GM13977 (cell line): ENCODE measurements at regions of chr10 and their contacts with region 1.

Region 1: DNA sequence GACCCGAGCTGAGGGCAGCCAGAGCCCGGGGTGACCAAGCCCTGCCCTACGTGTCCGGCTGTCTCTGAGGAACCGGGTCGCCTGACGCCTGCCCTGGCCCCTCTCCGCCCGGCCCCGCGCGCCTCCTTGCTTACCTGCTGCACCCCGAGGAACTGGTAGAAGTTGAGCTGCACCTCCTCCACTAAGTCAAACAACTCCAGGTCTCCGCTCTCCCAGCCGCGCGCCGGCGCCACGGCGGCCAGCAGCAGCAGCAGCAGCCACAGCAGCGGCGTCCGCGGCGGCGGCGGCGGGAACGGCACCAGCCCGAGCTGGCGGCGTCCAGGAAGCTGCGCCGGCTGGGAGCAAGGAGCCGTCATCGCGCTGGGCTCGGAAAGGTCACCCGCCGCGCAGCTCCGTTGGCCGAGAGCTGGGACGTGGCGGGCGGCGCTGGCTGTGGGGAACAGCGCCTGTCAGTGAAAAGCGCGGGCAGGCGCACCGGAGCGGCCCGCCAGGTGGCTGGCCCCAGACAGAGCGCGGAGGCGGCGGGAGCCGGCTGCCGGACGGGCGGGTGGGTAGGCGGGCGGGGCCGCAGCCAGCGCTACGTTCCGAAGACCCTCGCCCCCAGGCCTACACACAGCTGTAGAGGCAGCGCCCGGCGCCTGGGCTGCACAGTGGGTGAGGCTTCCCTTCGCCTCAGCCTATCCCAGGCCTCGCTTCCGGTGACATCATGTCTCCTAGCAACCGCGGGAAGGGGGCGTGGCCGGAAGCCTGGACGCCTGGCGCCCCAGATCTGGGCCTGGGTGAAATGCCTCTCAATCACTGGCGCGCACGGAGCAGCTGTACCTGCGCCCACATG is at the start of gene DNAJC1:
- DNase-seq: peak; percentile 94
- CTCF ChIP-seq: peak; percentile 0

Region 2: GRCh38 chr10:21638681-21639080 is 364.6 kb before region 1 on chr10:
- in situ Hi-C with region 1: no loop called
- DNase-seq: no peak
- CTCF ChIP-seq: no peak

Region 3: GRCh38 chr10:22218451-22218850 is 215.2 kb after region 1 on chr10:
- in situ Hi-C with region 1: loop called (anchors 25 kb)
- DNase-seq: no peak
- CTCF ChIP-seq: no peak

Region 4: GRCh38 chr10:22325272-22326144 is 322.2 kb after region 1 on chr10:
- in situ Hi-C with region 1: loop called (anchors 10 kb)
- DNase-seq: peak; percentile 91
- CTCF ChIP-seq: no peak

Region 5: DNA sequence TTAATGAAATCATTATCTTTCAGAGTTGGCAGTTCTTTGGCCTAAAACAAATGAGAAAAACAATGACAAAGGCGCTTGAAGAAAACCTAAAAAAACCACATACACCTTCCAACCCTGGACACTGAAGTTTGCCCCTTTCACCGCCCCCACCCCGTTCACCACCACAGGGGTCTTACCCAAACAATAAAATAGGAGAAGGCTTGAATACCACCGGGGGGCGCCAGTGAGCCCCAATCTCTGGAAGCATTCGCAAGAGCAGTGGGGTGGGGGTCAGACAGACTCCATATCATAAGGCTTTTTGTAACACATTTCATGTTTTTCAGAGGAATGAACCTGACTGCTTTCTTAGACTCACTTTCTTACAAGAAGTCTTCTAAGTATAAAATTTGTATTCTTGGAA is 547.4 kb after region 1 on chr10:
- in situ Hi-C with region 1: loop called (anchors 25 kb)
- DNase-seq: peak; percentile 52
- CTCF ChIP-seq: peak; percentile 59

Region 6: DNA sequence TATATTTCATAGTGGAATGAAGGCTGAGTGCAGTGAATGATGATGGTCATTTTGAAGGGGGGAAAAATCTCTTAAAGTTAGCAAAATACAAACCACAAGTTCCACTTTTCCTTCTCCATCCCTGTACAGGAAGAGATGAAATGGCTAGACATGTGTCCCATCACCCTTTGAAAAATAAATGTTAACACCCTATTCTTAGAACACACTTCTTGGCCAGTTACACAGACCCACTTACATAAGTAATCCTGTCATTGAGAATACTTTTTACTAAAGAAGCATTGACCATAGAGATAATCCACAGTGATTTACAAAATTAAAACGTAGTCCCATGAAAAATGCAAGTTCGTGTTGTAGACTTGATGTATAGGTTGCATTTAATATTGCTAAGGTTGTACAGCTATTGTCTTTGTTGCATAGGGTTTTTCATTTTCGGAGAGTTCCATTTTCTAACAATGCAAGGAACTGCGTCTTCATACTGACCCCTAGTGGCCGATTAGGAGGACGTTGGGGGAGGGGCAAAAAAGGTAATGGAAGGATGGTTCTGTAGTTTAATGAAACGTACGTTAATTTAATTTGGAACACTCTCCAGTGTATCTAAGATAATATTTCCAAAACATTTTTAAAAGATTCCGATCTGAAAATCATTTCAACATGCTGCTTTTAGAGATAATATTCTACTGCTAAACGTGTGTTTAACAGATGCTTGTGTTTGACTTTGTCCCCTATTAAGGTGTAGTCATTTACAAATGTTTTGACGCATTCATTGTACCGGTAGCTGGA is 985.5 kb after region 1 on chr10:
- in situ Hi-C with region 1: loop called (anchors 10 kb)
- DNase-seq: peak; percentile 64
- CTCF ChIP-seq: peak; percentile 91